ENCODE measurements at regions of chr1 and their contacts with region 1.

Region 1: DNA sequence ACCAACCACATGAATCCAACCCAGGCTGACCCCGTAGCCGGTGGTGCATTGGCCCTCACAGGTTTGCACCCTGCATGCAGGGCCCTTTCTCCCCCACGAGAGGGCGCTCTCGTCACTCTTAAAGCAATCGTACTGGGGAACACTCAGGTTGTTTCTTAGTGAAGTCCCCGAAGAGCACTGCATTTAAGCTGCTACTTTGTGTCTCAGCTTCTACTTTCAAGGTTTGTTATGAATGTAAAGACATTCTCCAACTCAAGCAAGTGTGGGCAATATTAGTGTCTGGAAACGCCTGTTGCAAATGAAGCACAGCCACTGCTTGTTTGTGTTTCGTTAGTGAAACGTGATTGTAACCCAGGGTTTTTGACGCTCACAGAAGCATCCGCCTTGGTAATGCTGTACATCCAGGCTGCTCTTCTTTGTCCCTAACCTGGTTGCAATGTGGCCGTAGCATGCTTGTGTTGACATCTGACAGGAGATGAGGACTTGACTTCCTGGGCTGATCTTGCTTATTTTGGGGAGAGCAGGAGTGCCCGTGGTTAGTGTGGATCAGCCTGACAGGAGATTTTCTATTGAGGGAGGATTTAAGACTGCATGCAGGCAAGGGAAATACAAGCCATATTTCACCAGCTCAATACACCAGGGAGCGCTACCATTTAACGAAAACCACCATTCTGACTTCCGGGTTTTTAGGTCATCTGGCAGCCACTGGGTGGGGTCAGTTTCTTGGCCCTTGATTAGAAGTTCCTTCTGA is 79.8 kb downstream of the ST6GALNAC3 start:
- DNase-seq: peak; percentile 77
- CTCF ChIP-seq: peak; percentile 94

Region 2: GRCh38 chr1:77126307-77126706 is 971.9 kb after region 1 on chr1:
- in situ Hi-C with region 1: loop called (anchors 25 kb)
- DNase-seq: peak; percentile 32
- CTCF ChIP-seq: peak; percentile 35